ENCODE measurements at regions of chr6 and their contacts with region 1.

Region 1: DNA sequence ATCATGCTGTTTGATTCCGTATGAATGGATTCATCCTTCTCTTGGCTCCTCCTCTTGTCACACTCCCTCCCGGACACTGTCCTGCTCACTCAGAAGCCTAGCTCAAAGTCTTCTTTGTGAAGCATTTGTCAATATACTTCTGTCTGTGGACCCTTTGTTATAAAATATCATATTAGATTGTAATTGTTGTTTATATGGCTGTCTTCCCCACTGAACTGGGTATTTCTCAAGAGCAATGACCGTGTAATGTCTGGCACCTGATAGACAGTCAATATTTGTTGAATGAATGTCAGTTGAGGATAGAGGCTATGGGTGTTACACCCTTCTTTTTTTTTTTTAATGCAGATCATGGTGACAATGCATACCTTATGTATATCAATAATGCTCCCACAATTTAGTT is 335.3 kb downstream of the SOX4 start:
- DNase-seq: no peak
- H3K4me3 Mint-ChIP-seq: no peak overlapping the region
- H3K27ac Mint-ChIP-seq: no peak overlapping the region
- H3K4me1 Mint-ChIP-seq: peaks cover 23% of the 10 kb centered on the region
- H3K27me3 Mint-ChIP-seq: no peaks in the 10 kb centered on the region

Region 2: GRCh38 chr6:21873562-21873961 is 55.3 kb before region 1 on chr6:
- intact Hi-C with region 1: loop called (anchors 5 kb)
- DNase-seq: no peak
- H3K4me3 Mint-ChIP-seq: no peak overlapping the region
- H3K27ac Mint-ChIP-seq: no peak overlapping the region
- H3K4me1 Mint-ChIP-seq: peaks cover 32% of the 10 kb centered on the region
- H3K27me3 Mint-ChIP-seq: no peaks in the 10 kb centered on the region

Measured in activated CD4-positive, alpha-beta T cell treated with anti-CD3 and anti-CD28 coated beads, Interleukin-2, amount 10 ng/mL, durations not matched to agents 24 days and 14 days (primary cell).